B cell (primary cell): ENCODE measurements at regions of chr11 and their contacts with region 1.

Region 1: GRCh38 chr11:64000026-64000739 is 13.9 kb downstream of the OTUB1 start:
- DNase-seq: peak; percentile 84
- ATAC-seq: peak; percentile 75
- H3K4me3 ChIP-seq: peak overlapping the region in 4 of 5 experiments; percentile 23 to 58 (median 48)
- H3K4me3 Mint-ChIP-seq: peak overlapping the region; percentile 71
- H3K27ac ChIP-seq: no peak overlapping the region
- H3K27ac Mint-ChIP-seq: no peak overlapping the region
- H3K4me1 ChIP-seq: peaks cover 21 to 26% of the 10 kb centered on the region in 2 donors
- H3K4me1 Mint-ChIP-seq: peaks cover 13% of the 10 kb centered on the region
- H3K27me3 ChIP-seq: peaks cover 0 to 10% (median 3%) of the 10 kb centered on the region in 4 experiments
- H3K27me3 Mint-ChIP-seq: peaks cover 4% of the 10 kb centered on the region
- CTCF ChIP-seq: peak; percentile 92

Region 2: DNA sequence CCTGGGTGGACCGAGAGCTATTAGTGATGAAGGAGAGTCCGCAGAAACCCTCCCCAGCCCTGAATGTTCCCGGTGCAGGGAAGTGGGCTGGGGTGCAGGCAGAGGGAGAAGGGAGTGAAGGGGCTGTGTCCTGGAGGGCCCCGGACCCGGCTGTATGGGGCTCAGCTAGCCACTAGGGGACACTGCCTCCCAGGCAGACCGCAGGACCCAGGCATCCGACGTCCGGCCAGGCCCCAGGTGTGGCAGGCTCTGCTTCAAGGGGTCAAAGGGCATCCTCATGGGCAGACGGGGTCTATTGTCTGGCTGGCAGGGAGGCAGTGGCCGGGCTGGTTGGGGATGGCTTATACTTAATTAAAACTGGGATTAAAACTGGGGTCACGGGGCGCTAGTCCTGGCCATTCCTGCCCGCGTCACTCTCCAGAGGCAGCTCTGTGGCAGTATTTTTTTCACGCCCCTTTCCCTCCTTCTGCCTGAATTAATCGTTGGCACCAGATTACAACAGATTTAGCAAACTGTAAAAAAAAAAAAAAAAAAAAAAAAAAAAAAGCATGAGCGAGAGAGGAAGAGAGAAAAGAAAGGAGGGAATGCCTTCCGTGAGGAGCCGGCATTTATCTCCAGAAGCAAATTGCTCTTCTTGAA is 40.6 kb after region 1 on chr11:
- CTCF ChIA-PET with region 1: no interaction called
- POLR2A ChIA-PET with region 1: no interaction called
- intact Hi-C with region 1: no loop called
- DNase-seq: no peak
- ATAC-seq: no peak
- H3K4me3 ChIP-seq: no peak overlapping the region
- H3K4me3 Mint-ChIP-seq: no peak overlapping the region
- H3K27ac ChIP-seq: no peak overlapping the region
- H3K27ac Mint-ChIP-seq: no peak overlapping the region
- H3K4me1 ChIP-seq: peaks cover 5 to 11% of the 10 kb centered on the region in 2 donors
- H3K4me1 Mint-ChIP-seq: no peaks in the 10 kb centered on the region
- H3K27me3 ChIP-seq: peaks cover 0 to 20% (median 3%) of the 10 kb centered on the region in 4 experiments
- H3K27me3 Mint-ChIP-seq: peaks cover 15% of the 10 kb centered on the region
- CTCF ChIP-seq: no peak

Region 3: GRCh38 chr11:64127267-64128072 is 127.3 kb after region 1 on chr11:
- CTCF ChIA-PET with region 1: no interaction called
- POLR2A ChIA-PET with region 1: no interaction called
- intact Hi-C with region 1: no loop called
- DNase-seq: no peak
- ATAC-seq: no peak
- H3K4me3 ChIP-seq: no peak overlapping the region
- H3K4me3 Mint-ChIP-seq: no peak overlapping the region
- H3K27ac ChIP-seq: no peak overlapping the region
- H3K27ac Mint-ChIP-seq: no peak overlapping the region
- H3K4me1 ChIP-seq: no peaks in the 10 kb centered on the region
- H3K4me1 Mint-ChIP-seq: no peaks in the 10 kb centered on the region
- H3K27me3 ChIP-seq: no peaks in the 10 kb centered on the region
- H3K27me3 Mint-ChIP-seq: peaks cover 6% of the 10 kb centered on the region
- CTCF ChIP-seq: no peak

Region 4: DNA sequence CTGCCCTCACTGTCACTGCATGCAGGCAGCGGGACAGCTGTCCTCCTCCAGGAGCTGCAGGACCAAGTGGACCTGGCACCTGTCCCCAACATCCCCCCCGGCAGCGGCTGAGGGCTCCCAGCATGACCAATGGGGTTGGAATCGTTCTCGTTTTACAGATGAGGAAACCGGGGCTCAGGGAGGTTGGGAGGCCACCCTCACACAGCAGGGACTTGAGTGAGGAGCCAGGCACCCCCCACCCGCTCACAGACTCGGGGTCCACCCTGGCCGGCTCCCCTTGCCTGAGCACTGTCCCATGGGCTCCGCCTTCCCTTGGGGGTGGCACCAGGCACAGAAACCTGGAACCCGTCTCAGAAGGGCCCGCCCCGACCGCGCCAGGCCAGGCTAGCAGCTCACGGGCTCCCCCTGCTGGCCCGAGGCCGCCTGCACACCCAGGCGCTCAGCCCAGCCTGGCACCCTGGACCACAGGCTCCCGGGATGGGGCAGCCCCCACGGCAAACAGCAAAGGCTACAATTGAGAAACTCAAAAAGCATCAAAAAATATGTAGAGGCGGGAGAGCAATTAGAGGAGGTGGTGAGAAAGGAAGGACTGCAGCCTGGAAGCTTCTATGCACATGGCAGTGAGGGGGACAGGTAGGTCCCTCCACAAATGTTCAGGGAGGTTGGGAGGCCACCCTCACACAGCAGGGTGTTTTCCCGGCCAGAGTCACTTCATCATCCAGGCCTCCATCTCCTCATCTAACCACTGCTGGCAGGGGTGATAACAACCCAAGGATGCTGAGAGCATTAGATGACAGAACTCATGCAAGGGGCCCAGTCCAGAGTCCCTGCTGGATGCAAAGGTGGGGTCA is 152.9 kb after region 1 on chr11:
- CTCF ChIA-PET with region 1: interaction called, 102 read pairs
- POLR2A ChIA-PET with region 1: no interaction called
- intact Hi-C with region 1: loop called (anchors 1 kb)
- DNase-seq: peak; percentile 79
- ATAC-seq: peak; percentile 97
- H3K4me3 ChIP-seq: no peak overlapping the region
- H3K4me3 Mint-ChIP-seq: no peak overlapping the region
- H3K27ac ChIP-seq: no peak overlapping the region
- H3K27ac Mint-ChIP-seq: no peak overlapping the region
- H3K4me1 ChIP-seq: peaks cover 0 to 12% of the 10 kb centered on the region in 2 donors
- H3K4me1 Mint-ChIP-seq: peaks cover 2% of the 10 kb centered on the region
- H3K27me3 ChIP-seq: no peaks in the 10 kb centered on the region
- H3K27me3 Mint-ChIP-seq: no peaks in the 10 kb centered on the region
- CTCF ChIP-seq: peak; percentile 99